ENCODE measurements at regions of chr4 and their contacts with region 1.

Region 1: DNA sequence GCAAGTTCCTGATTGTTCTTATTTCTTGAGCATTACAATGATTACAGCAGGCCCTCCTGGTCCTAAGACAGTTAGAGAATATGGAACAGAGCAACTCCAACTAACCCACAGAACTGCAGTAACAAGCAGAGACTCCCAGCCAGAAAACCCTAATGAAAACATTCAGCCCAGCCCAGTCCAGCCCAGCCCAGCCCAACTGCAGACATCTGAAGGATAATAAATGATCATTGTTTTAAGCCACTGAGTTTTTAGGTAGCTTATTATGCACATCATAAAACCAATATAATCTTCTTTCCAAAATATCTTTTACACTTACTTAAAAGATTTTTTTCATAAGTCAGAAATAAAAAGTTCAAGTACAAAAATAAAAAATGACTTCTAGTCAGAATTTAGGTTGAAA is 51.3 kb downstream of the SPOCK3 start:
- DNase-seq: no peak
- ATAC-seq: no peak

Region 2: GRCh38 chr4:166518776-166519175 is 664.3 kb before region 1 on chr4:
- intact Hi-C with region 1: loop called in 1 of 2 experiments (anchors 10 kb)
- DNase-seq: no peak
- ATAC-seq: no peak